Sigmoid colon (tissue), 7 donors: ENCODE measurements at regions of chr10 and their contacts with region 1.

Region 1: GRCh38 chr10:117167789-117168674 is 29.3 kb upstream of the KCNK18 start:
- DNase-seq: peak; percentile 69
- H3K4me3 ChIP-seq: peak overlapping the region in 2 of 4 donors; percentile 14 to 28
- H3K27ac ChIP-seq: no peak overlapping the region
- H3K4me1 ChIP-seq: peaks cover 0 to 48% (median 34%) of the 10 kb centered on the region in 4 donors
- H3K27me3 ChIP-seq: peaks cover 58 to 100% (median 82%) of the 10 kb centered on the region in 3 donors
- CTCF ChIP-seq: peak; percentile 46 to 91 (median 63)
- EP300 ChIP-seq: no peak
- POLR2A ChIP-seq: no peak

Region 2: GRCh38 chr10:116683821-116684220 is 484.2 kb before region 1 on chr10:
- intact Hi-C with region 1: loop called (anchors 5 kb)
- DNase-seq: no peak
- H3K4me3 ChIP-seq: no peak overlapping the region
- H3K27ac ChIP-seq: no peak overlapping the region
- H3K4me1 ChIP-seq: peaks cover 0 to 20% (median 8%) of the 10 kb centered on the region in 4 donors
- H3K27me3 ChIP-seq: no peaks in the 10 kb centered on the region
- CTCF ChIP-seq: no peak
- EP300 ChIP-seq: no peak
- POLR2A ChIP-seq: no peak